ENCODE measurements at regions of chr1 and their contacts with region 1.

Region 1: DNA sequence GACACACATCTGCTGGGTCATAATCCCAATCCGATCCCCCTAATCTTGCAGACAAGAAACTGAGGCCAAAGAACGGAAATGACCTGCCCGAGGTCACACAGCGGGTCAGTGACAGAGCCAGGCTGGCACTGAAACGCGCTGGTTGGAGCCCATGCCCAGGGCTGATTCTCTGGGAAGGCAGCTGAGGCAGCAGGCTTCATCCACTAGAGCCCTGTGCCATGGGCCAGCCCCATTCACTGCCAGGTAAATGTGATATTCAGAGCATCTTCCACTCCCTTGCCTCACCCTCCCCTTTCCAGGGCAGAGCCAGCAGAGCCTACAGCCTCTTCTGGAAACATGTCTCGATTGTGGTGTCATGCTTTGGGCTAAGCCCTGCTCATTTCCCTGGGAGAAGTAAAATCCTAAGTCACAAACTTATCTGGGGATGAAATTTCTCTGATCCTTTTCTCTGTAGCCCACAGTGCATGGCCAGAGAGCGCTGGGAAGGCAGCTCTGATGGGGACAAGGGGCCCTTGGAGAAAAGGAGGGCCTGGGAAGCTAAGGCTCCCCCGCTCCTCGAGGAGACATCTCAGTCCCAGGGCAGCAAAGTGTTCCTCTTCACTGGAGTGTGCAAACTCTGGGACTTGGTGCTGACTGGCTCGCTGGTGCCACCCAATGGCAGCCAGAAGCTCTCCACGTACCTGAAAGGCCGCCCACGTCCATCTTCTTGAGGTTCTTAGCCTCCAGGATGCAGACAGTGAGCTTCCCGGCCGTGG is 110.4 kb downstream of the SYT2 start:
- DNase-seq: peak; percentile 67
- H3K4me3 ChIP-seq: no peak overlapping the region
- H3K27ac ChIP-seq: no peak overlapping the region
- H3K4me1 ChIP-seq: peaks cover 4% of the 10 kb centered on the region
- CTCF ChIP-seq: peak; percentile 81

Region 2: GRCh38 chr1:202304375-202304774 is 295.5 kb before region 1 on chr1:
- CTCF ChIA-PET with region 1: no interaction called
- POLR2A ChIA-PET with region 1: no interaction called
- intact Hi-C with region 1: no loop called
- DNase-seq: no peak
- H3K4me3 ChIP-seq: no peak overlapping the region
- H3K27ac ChIP-seq: no peak overlapping the region
- H3K4me1 ChIP-seq: no peaks in the 10 kb centered on the region
- CTCF ChIP-seq: no peak

Region 3: GRCh38 chr1:202501281-202501680 is 98.6 kb before region 1 on chr1:
- CTCF ChIA-PET with region 1: no interaction called
- POLR2A ChIA-PET with region 1: no interaction called
- intact Hi-C with region 1: loop called (anchors 1 kb)
- DNase-seq: peak; percentile 16
- H3K4me3 ChIP-seq: no peak overlapping the region
- H3K27ac ChIP-seq: no peak overlapping the region
- H3K4me1 ChIP-seq: no peaks in the 10 kb centered on the region
- CTCF ChIP-seq: peak; percentile 72